Activated CD8-positive, alpha-beta memory T cell treated with anti-CD3 and anti-CD28 coated beads, Interleukin-2, amount 10 ng/mL, durations not matched to agents 7 days and 5 days (primary cell): ENCODE measurements at regions of chr16 and their contacts with region 1.

Region 1: DNA sequence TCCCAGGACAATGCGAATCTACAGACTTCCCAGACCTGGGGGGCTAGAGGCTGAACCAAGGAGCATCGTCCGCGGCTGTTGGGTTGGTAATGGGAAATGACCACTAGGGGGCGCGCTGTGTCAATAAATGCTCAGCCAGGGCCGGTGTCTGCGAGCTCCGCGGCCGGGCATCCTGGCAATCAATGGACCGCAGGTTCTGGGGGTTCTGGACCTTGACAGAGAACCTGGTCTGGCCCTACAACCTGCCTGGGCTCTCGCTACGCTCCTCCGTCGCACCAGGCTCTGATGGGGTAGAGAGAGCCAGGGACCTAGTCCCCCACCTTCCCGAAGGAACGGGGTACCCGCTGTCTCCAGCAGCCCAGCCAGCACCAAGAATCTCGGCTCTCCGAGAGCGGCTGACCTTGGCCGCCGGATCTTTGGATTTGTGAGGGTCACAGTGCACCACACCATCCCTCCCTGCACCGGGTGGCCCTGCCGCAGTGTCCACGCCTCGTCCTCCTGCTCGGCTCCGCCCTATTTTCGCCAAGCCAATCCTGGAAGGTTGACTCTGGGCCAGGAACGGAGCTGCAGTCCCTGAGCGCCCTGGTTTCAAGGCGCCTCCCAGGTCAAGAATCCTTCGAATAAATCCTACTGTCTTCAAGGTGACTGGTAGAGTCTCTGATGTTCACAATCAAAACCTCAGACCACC is 20.4 kb upstream of the BEAN1 start:
- DNase-seq: peak; percentile 91
- ATAC-seq: peak; percentile 93
- H3K4me3 Mint-ChIP-seq: peak overlapping the region; percentile 78
- H3K27ac Mint-ChIP-seq: peak overlapping the region; percentile 8
- H3K4me1 Mint-ChIP-seq: peaks cover 23% of the 10 kb centered on the region
- H3K27me3 Mint-ChIP-seq: peaks cover 14% of the 10 kb centered on the region

Region 2: GRCh38 chr16:66395806-66396555 is 10.7 kb before region 1 on chr16:
- CTCF ChIA-PET with region 1: interaction called, 15 read pairs
- DNase-seq: no peak
- ATAC-seq: no peak
- H3K4me3 Mint-ChIP-seq: no peak overlapping the region
- H3K27ac Mint-ChIP-seq: no peak overlapping the region
- H3K4me1 Mint-ChIP-seq: no peaks in the 10 kb centered on the region
- H3K27me3 Mint-ChIP-seq: peaks cover 13% of the 10 kb centered on the region

Region 3: GRCh38 chr16:66511615-66512500 is 105.2 kb after region 1 on chr16:
- CTCF ChIA-PET with region 1: interaction called, 35 read pairs
- DNase-seq: peak; percentile 40
- ATAC-seq: no peak
- H3K4me3 Mint-ChIP-seq: no peak overlapping the region
- H3K27ac Mint-ChIP-seq: no peak overlapping the region
- H3K4me1 Mint-ChIP-seq: peaks cover 26% of the 10 kb centered on the region
- H3K27me3 Mint-ChIP-seq: no peaks in the 10 kb centered on the region

Region 4: DNA sequence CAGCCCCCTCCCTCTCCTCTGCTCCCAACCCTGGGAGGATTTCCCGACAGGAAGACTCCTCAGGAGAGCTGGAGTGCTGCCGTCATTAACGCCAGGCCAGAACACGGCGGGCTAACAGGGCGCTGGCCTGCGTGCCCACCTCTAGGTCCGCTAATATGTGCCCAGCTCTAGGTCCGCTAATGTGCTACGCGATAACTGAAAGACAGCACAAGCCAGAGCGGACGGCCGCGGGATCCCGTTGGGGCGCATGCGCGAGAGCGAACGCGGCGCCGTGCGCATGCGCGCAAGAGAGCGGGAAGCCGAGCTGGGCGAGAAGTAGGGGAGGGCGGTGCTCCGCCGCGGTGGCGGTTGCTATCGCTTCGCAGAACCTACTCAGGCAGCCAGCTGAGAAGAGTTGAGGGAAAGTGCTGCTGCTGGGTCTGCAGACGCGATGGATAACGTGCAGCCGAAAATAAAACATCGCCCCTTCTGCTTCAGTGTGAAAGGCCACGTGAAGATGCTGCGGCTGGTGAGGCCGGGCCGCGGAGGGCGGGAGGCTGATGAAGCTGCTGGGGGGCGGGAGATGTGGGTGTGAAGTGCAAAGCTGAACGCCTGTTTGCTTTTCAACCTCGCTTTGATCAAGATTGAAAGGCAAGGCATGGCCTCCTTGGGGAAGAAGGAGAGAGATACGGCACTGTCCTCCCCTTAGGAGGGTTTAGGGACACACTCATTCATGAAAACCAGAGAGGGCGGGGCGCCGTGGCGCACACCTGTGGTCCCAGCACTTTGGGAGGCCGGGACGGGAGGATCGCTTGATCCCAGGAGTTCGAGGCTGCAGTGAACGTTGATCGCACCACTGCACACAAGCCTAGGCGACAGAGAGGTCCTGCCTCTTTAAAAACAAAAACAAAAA is 145.9 kb after region 1 on chr16 and contains the start of gene CKLF:
- CTCF ChIA-PET with region 1: interaction called, 17 read pairs
- DNase-seq: peak; percentile 94
- ATAC-seq: peak; percentile 74
- H3K4me3 Mint-ChIP-seq: peak within 1 kb of the TSS; percentile 98
- H3K27ac Mint-ChIP-seq: peak within 1 kb of the TSS; percentile 96
- H3K4me1 Mint-ChIP-seq: peaks cover 80% of the 10 kb centered on the region
- H3K27me3 Mint-ChIP-seq: no peaks in the 10 kb centered on the region
- total RNA-seq, gene CKLF: 199 to 220 TPM

Region 5: GRCh38 chr16:66650707-66651473 is 244.2 kb after region 1 on chr16:
- CTCF ChIA-PET with region 1: interaction called, 11 read pairs
- DNase-seq: peak; percentile 91
- ATAC-seq: peak; percentile 100
- H3K4me3 Mint-ChIP-seq: peak overlapping the region; percentile 43
- H3K27ac Mint-ChIP-seq: peak overlapping the region; percentile 7
- H3K4me1 Mint-ChIP-seq: peaks cover 18% of the 10 kb centered on the region
- H3K27me3 Mint-ChIP-seq: no peaks in the 10 kb centered on the region